BJ (cell line): ENCODE measurements at regions of chr1 and their contacts with region 1.

Region 1: GRCh38 chr1:178645808-178646200 is 79.2 kb upstream of the RALGPS2 start:
- DNase-seq: peak; percentile 70
- H3K4me3 ChIP-seq: no peak overlapping the region
- H3K27me3 ChIP-seq: no peaks in the 10 kb centered on the region
- CTCF ChIP-seq: no peak

Region 2: GRCh38 chr1:178614286-178614685 is 31.5 kb before region 1 on chr1:
- CTCF ChIA-PET with region 1: no interaction called
- POLR2A ChIA-PET with region 1: no interaction called
- DNase-seq: no peak
- H3K4me3 ChIP-seq: no peak overlapping the region
- H3K27me3 ChIP-seq: no peaks in the 10 kb centered on the region
- CTCF ChIP-seq: no peak

Region 3: GRCh38 chr1:178672434-178672833 is 26.6 kb after region 1 on chr1:
- CTCF ChIA-PET with region 1: no interaction called
- POLR2A ChIA-PET with region 1: no interaction called
- DNase-seq: no peak
- H3K4me3 ChIP-seq: no peak overlapping the region
- H3K27me3 ChIP-seq: no peaks in the 10 kb centered on the region
- CTCF ChIP-seq: no peak

Region 4: GRCh38 chr1:178725603-178726517 is 80.1 kb after region 1 on chr1:
- CTCF ChIA-PET with region 1: no interaction called
- POLR2A ChIA-PET with region 1: interaction called, 12 read pairs
- DNase-seq: no peak
- H3K4me3 ChIP-seq: peak overlapping the region; percentile 90
- H3K27me3 ChIP-seq: no peaks in the 10 kb centered on the region
- CTCF ChIP-seq: peak; percentile 16; the same call in 1 of the 2 replicates